A549 (cell line): ENCODE measurements at regions of chr16 and their contacts with region 1.

Region 1: DNA sequence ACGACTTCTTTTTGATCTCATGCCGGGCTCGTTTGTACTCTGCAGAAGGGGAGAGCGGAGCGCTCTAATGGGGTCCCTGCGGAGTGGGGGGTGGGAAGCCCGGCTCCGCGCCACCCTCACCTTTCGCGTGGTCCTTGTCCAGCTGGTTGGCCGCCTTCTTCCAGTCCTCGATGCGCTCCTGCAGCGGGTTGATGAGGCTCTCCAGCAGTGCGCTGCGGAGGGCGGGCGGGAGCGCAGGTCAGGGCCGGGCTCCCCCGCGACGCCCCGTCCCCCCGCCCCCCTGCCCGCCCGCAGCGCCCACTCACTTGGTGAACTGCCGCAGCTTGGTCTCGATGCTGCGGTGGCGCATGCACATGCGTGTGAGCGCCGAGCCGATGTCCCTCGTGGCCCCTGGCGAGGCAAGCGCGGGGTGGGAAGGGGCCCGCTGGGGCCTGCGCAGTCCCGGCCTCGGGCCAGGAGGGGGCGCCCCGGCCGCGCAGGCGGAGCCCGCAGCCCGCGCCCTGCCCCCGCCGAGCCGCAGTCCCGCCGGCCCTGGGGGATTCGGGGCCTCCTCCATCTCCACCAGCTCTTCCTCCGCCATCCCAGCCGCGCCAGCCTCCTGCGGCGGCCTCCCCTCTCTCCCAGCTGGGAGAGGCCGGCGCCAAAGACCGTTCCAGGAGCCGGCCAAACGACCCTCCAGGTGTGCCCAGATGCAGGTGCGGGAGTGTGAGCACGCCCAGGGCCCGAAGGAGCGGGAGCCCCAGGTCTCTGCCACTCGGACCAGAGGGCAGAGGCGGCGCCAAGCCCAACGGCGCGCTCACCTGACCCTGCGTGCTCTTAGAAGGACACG is 6.0 kb downstream of the MTSS2 start:
- DNase-seq: peak in 1 of 2 experiments; percentile 54
- ATAC-seq: peak; percentile 37 to 57; a peak in 3 of 6 replicates
- H3K4me3 ChIP-seq: no peak overlapping the region
- H3K27ac ChIP-seq: peak overlapping the region; percentile 33 to 97; a peak in 3 of 6 replicates
- H3K4me1 ChIP-seq: peaks cover 54% of the 10 kb centered on the region
- CTCF ChIP-seq: peak; percentile 80
- EP300 ChIP-seq: no peak
- POLR2A ChIP-seq: no peak
- RAD21 ChIP-seq: peak; percentile 42 to 89; a peak in 4 of 5 replicates

Region 2: DNA sequence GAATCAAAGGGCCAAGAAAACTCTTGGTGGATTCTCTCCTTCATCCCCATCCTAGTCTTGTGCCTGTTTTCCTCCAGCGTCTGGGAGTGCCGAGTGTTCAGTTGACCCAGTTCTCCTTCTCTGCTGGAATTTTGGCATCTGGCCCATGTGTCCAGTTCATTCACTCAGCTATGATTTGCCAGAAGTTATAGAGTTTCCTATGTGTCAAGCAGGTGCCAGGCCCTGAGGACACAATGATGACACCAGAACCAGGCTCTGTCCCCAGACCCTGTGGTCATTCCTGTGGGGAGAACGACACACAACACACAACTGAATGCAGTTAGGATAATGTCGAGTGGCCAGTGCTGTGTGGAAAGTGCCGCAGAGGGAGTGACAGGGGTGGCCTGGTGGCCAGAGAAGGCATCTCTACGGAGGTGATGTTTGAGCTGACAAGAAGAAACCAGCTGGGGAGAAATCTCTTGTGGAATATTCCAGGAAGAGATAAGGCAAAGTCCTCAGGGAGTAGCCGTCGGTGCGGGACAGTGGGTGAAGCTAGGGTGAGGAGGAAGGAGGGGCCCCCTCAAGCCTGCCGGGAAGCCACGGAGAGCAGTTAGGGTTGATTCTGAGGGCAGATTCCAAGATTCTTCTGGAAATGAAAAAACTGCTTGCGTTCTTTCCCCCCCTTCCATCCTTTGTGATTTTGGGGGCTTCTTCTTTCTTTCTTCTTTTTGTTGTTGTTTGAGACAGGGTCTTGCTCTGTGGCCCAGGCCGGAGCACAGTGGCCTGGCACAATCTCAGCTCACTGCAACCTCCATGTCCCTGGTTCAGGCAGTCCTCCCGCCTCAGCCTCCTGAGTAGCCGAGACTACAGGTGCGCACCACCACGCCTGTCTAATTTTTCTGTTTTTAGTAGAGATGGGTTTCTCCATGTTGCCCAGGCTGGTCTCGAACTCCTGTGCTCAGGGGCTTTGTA is 69.3 kb before region 1 on chr16:
- CTCF ChIA-PET with region 1: no interaction called
- POLR2A ChIA-PET with region 1: no interaction called
- DNase-seq: no peak
- ATAC-seq: peak; percentile 38 to 56; a peak in 2 of 6 replicates
- H3K4me3 ChIP-seq: no peak overlapping the region
- H3K27ac ChIP-seq: no peak overlapping the region
- H3K4me1 ChIP-seq: no peaks in the 10 kb centered on the region
- CTCF ChIP-seq: no peak
- EP300 ChIP-seq: no peak
- POLR2A ChIP-seq: no peak
- RAD21 ChIP-seq: no peak

Region 3: DNA sequence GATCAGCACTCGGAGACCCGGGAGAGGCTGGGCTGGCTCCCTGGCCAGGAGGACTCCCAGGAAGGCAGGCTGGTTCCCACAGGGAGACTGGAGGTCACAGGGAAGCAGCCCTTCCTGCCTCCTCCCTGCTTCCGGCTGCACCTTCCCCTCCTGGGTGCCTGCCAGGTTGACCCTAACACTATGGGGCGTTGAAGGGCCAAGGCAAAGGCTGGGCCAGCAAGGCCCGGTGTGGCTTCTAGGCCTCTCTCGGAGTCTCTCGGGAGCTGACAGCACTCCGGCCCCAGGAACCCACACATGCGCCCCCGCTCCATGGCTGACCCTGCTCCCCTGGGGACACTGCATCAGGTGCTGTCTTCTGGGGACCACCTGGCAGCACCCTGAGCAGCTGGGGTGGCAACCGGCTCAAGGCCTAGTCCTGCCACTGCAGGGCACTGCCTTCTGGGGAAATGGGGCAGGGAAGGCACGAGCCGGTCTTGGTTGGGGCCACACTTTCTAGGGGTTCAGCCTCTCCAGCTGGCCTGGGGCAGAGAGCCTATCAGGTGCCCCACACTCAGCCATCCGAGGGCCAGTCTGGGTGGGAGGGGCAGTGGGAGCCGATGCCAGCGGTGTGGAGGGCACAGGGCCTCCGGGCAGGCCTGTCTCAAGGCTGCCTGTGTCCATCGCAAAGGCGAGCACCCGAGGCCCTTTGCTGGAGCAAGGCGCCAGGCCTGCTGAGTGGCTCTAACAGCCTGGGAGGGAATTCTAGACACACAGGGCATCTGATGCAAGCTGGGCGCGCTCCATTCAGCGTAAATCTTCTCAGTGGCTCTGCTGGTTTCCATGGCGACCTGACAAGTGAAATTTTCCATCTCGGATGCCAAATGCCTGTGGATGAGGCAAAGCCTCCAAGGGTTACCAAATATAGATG is 11.6 kb after region 1 on chr16:
- CTCF ChIA-PET with region 1: interaction called, 31 read pairs
- POLR2A ChIA-PET with region 1: no interaction called
- DNase-seq: peak in 1 of 2 experiments; percentile 67
- ATAC-seq: no peak; a peak in 1 of 6 replicates
- H3K4me3 ChIP-seq: no peak overlapping the region
- H3K27ac ChIP-seq: peak overlapping the region; percentile 97 to 100
- H3K4me1 ChIP-seq: peaks cover 97% of the 10 kb centered on the region
- CTCF ChIP-seq: no peak
- EP300 ChIP-seq: no peak
- POLR2A ChIP-seq: no peak
- RAD21 ChIP-seq: no peak

Region 4: GRCh38 chr16:70703041-70703834 is 23.4 kb after region 1 on chr16:
- CTCF ChIA-PET with region 1: interaction called, 10 read pairs
- POLR2A ChIA-PET with region 1: no interaction called
- DNase-seq: peak in 1 of 2 experiments; percentile 40
- ATAC-seq: peak; percentile 35 to 60; a peak in 4 of 6 replicates
- H3K4me3 ChIP-seq: no peak overlapping the region
- H3K27ac ChIP-seq: peak overlapping the region; percentile 51 to 92; a peak in 4 of 6 replicates
- H3K4me1 ChIP-seq: peaks cover 71% of the 10 kb centered on the region
- CTCF ChIP-seq: no peak
- EP300 ChIP-seq: no peak
- POLR2A ChIP-seq: no peak
- RAD21 ChIP-seq: no peak

Region 5: DNA sequence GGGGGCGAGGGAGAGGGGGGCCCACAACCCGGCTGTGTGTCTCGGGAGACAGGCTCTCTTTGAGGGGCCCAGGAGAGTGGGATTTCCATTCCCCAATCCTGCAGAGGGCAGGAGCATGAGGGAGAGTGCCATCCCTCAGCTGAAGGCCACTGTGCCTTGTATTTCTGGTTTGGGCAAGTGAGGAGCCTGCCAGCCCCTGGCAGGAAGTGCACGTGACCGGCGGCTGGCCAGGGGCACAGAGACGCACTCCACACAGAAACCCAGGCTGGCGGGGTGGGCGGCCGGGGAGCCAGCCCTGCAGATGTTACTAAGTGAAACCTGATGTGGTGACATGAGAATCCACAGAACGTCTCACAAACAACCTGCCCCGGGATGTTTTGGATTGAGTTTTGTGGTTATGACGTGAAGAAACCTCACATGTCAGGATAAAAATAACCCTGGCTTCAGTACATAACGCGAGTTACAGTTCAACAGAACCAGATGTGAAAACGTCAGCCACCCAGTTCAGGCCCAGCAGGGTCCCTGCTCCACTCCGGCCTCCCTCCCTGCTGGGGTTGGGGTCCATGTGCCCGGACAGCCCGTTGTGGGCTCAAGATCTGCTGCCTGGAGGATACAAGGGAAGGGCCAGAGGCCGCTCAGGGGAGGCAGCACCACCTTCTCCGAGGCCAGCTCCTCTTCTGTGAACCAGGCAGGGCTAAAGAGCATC is 57.6 kb after region 1 on chr16:
- CTCF ChIA-PET with region 1: interaction called, 88 read pairs
- POLR2A ChIA-PET with region 1: no interaction called
- DNase-seq: no peak
- ATAC-seq: no peak
- H3K4me3 ChIP-seq: no peak overlapping the region
- H3K27ac ChIP-seq: peak overlapping the region in 1 of 2 experiments; percentile 63; a peak in 3 of 6 replicates
- H3K4me1 ChIP-seq: peaks cover 17% of the 10 kb centered on the region
- CTCF ChIP-seq: no peak
- EP300 ChIP-seq: no peak
- POLR2A ChIP-seq: no peak
- RAD21 ChIP-seq: no peak

Region 6: DNA sequence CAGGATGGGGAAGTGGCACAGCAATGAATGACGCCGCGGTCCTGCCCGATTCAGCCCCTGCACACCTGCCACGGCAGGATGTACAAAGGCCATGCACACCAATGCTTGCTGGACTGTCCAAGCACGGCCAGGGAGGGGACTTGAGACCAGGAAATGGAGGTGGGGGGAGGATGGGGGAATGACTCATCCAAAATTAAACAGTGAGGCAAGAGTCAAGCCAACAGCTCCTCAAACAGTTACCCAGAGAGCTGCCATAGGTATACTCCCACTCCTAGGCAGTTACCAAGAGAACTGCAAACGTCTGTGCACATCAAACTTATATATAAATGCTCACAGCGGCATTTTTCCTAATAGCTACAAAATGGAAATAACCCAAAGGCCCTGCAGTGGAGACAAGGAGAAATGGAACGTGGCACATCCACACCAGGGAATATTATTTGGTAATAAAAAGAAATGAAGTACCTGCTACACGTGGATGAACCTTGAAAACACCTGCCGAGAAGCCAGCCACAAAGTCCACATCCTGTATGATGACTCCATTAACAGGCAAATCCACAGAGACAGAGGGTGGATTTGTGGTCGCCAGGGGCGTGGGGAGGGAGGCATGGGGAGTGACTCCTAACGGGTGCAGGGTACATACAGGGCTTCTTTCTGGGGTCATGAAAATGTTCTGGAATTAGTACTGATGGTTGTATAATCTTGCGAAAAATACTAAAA is 67.0 kb after region 1 on chr16:
- CTCF ChIA-PET with region 1: interaction called, 88 read pairs
- POLR2A ChIA-PET with region 1: interaction called, 3 read pairs
- DNase-seq: peak; percentile 91 to 95
- ATAC-seq: peak; percentile 83 to 88
- H3K4me3 ChIP-seq: no peak overlapping the region
- H3K27ac ChIP-seq: peak overlapping the region; percentile 94 to 97
- H3K4me1 ChIP-seq: peaks cover 71% of the 10 kb centered on the region
- CTCF ChIP-seq: no peak
- EP300 ChIP-seq: peak; percentile 32 to 66; a peak in 1 of 5 replicates
- POLR2A ChIP-seq: peak; percentile 11; the same call in 1 of the 2 replicates
- RAD21 ChIP-seq: peak; percentile 22 to 32; a peak in 2 of 5 replicates

Region 7: DNA sequence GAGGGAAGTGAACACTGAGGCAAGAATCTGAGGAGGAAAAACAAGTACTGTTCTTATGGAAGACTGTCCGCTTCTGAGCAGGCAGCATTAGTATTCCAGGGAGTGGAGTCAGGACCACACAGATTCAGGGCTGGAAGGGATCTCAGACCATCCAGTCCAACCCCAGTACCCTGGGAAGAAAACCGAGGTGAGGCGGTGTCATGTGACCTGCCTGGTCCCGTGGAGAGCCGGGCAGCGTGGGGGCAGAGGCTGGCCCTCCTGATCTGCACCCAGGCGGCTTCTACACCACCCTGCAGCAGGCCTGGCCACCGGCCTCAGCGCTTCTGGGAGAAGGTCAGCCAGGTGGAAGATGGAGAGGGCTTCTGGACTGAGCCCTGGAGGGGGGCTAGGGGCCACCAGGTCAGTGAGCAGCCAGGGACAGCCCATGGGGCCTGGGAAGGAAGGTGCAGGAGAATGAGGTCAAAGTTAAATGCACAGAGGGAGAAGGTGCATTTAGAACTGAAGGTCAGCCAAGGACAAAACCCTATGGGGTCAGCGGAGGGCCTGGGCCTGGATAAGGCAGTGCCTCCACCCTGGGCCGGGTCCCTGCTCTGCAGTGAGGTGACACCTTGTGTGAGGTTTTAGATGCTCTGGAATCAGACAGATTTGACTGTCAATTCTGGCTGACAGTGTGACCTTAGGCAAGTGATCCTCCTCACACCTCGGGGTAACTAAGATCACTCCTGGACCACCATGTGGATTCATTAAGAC is 75.1 kb after region 1 on chr16:
- CTCF ChIA-PET with region 1: interaction called, 26 read pairs
- POLR2A ChIA-PET with region 1: no interaction called
- DNase-seq: no peak
- ATAC-seq: no peak
- H3K4me3 ChIP-seq: no peak overlapping the region
- H3K27ac ChIP-seq: 0 out of 6 replicates have a peak overlapping the region, but pooled peaks of 1 of the 2 experiments have one; percentile 22
- H3K4me1 ChIP-seq: peaks cover 35% of the 10 kb centered on the region
- CTCF ChIP-seq: no peak
- EP300 ChIP-seq: no peak
- POLR2A ChIP-seq: no peak
- RAD21 ChIP-seq: no peak